Activated CD4-positive, alpha-beta T cell treated with anti-CD3 and anti-CD28 coated beads, Interleukin-2, amount 10 ng/mL, durations not matched to agents 24 days and 14 days (primary cell): ENCODE measurements at regions of chr4 and their contacts with region 1.

Region 1: DNA sequence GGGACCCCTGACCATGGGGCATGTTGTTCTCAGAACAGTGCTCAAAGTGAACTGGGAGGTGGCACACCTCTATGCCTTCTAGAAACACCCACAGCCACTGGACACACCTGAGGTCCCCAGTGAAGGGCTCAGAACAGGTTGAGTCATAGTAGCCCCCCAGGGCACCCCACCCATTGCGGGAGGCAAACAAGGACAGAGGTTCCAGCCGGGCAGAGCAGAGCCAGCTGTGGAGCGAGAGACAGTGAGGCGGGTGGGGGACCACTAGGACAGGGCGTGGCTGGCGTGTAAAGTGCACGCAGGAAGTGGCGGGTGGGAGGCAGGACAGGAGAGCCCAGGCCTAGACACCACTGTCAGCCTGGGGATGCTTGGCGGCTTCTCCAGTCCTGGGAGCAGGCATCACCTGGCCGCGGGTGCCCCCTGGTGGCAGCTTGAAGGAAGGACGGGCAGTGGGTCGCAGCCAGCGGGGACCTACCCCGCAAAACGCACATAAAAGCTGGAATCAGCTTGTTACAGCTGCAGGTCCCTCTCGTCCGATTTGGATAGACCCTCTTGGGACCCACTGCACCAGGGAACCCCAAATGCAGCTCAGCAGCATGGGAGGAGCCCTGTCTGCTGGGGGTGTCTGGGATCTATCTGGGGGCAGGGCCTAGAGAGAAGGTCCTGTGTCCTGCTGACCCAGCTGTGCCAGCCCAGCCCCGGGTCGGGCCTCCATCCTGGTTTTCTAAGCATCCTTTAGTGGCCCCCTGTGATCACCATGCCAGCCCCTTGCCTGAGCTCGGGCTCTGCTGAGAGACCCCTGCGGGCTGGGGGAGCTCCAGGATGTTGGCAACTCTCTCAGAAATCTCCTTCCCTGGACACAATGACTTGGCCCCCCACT is 57.6 kb downstream of the WFS1 start:
- DNase-seq: peak; percentile 93
- H3K4me3 Mint-ChIP-seq: no peak overlapping the region
- H3K27ac Mint-ChIP-seq: no peak overlapping the region
- H3K4me1 Mint-ChIP-seq: peaks cover 6% of the 10 kb centered on the region
- H3K27me3 Mint-ChIP-seq: peaks cover 12% of the 10 kb centered on the region

Region 2: DNA sequence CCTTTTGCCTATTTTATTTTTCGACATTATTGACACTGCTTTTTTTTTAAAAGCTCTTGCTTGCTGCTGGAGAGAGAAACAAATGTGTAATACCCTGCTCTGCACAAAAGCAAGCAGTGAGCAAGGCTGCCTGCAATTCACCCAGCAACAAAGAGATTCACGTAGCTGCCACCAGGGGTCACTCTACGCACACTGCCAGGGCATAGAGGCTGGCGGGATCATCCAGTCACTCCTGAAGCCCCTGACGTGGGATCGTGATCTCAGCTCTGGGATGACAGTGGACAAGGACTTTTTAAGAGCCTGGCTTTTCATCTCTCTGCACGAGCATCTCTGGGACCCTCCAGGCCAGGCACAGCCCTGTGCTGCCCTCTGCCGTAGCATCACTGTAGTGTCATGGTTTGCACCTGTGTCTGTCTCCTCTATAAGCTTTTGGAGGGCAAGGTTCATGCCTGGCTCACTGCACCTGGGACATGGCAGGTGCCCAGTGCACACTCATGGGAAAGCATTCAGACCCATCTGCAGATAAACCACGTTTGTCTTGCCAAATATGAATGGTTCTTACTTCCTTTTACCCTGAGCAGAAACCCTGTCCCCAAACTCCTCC is 328.8 kb before region 1 on chr4:
- intact Hi-C with region 1: loop called (anchors 1 kb)
- DNase-seq: peak; percentile 82
- H3K4me3 Mint-ChIP-seq: no peak overlapping the region
- H3K27ac Mint-ChIP-seq: no peak overlapping the region
- H3K4me1 Mint-ChIP-seq: peaks cover 6% of the 10 kb centered on the region
- H3K27me3 Mint-ChIP-seq: peaks cover 2% of the 10 kb centered on the region

Region 3: DNA sequence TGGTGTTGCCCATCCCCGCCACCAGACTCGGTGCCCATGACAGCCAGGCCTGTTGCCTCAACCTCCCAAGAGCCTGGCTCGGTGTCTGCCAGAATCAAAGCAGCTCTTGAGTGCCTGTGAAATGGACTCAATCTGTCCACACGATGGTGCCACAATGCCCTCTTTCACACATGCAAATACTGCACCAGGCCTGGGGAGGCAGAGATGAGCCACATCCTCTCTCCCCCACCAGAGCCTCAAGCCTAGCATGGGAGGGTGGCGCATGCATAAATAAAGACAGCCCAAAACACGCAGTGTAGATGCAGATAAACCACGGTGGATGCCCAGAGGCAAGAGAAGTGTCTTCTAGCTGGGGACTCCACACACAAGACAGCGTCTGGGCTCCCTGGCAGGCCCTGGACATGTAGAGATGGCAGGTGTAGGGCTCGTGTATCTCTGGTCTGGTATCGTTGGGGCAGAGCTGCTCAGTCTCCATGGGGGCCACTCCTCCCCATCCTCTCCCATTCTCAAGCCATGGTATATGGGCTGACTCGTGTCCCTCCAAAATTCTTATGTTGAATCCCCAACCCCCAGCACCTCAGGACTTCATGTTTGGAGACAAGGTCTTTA is 192.6 kb before region 1 on chr4:
- intact Hi-C with region 1: loop called (anchors 10 kb)
- DNase-seq: peak; percentile 83
- H3K4me3 Mint-ChIP-seq: no peak overlapping the region
- H3K27ac Mint-ChIP-seq: peak overlapping the region; percentile 39
- H3K4me1 Mint-ChIP-seq: peaks cover 15% of the 10 kb centered on the region
- H3K27me3 Mint-ChIP-seq: no peaks in the 10 kb centered on the region

Region 4: GRCh38 chr4:6250235-6250983 is 76.9 kb before region 1 on chr4:
- intact Hi-C with region 1: loop called (anchors 1 kb)
- DNase-seq: peak; percentile 83
- H3K4me3 Mint-ChIP-seq: no peak overlapping the region
- H3K27ac Mint-ChIP-seq: no peak overlapping the region
- H3K4me1 Mint-ChIP-seq: peaks cover 1% of the 10 kb centered on the region
- H3K27me3 Mint-ChIP-seq: peaks cover 37% of the 10 kb centered on the region

Region 5: GRCh38 chr4:6269616-6270511 is 57.4 kb before region 1 on chr4 and contains the start of gene WFS1:
- intact Hi-C with region 1: loop called (anchors 5 kb)
- DNase-seq: peak; percentile 99
- H3K4me3 Mint-ChIP-seq: peak within 1 kb of the TSS; percentile 82
- H3K27ac Mint-ChIP-seq: no peak within 1 kb of the TSS
- H3K4me1 Mint-ChIP-seq: peaks cover 14% of the 10 kb centered on the region
- H3K27me3 Mint-ChIP-seq: peaks cover 32% of the 10 kb centered on the region
- total RNA-seq, gene WFS1: 4.7 and 5.9 TPM in 2 replicates